ENCODE measurements at regions of chr14 and their contacts with region 1.

Region 1: DNA sequence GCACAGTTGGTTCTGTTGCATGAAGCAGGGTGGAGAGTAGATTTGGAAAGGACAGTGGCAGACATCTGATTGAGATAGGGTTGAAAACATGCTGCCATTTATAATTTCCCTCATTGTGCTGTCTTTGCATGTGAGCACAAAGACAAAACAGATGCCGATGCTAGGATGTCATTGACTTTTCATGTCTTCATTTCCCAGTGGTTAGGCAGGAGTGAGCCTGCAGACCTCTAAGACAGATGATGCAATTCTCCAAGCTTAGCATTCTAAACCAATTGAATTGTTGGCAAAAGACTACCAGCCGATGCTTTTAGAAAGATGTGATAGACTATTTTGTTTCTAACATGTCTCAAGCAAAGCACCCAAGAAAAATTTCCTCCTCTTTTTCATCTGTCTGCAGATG is 37.1 kb upstream of the PELI2 start:
- DNase-seq: no peak
- ATAC-seq: no peak
- H3K4me3 ChIP-seq: no peak overlapping the region
- H3K27ac ChIP-seq: no peak overlapping the region
- H3K4me1 ChIP-seq: no peaks in the 10 kb centered on the region
- H3K27me3 ChIP-seq: no peaks in the 10 kb centered on the region

Region 2: GRCh38 chr14:56044196-56044595 is 36.9 kb before region 1 on chr14:
- intact Hi-C with region 1: loop called in 1 of 2 experiments (anchors 5 kb)
- DNase-seq: no peak
- ATAC-seq: no peak
- H3K4me3 ChIP-seq: no peak overlapping the region
- H3K27ac ChIP-seq: no peak overlapping the region
- H3K4me1 ChIP-seq: no peaks in the 10 kb centered on the region
- H3K27me3 ChIP-seq: no peaks in the 10 kb centered on the region

Region 3: DNA sequence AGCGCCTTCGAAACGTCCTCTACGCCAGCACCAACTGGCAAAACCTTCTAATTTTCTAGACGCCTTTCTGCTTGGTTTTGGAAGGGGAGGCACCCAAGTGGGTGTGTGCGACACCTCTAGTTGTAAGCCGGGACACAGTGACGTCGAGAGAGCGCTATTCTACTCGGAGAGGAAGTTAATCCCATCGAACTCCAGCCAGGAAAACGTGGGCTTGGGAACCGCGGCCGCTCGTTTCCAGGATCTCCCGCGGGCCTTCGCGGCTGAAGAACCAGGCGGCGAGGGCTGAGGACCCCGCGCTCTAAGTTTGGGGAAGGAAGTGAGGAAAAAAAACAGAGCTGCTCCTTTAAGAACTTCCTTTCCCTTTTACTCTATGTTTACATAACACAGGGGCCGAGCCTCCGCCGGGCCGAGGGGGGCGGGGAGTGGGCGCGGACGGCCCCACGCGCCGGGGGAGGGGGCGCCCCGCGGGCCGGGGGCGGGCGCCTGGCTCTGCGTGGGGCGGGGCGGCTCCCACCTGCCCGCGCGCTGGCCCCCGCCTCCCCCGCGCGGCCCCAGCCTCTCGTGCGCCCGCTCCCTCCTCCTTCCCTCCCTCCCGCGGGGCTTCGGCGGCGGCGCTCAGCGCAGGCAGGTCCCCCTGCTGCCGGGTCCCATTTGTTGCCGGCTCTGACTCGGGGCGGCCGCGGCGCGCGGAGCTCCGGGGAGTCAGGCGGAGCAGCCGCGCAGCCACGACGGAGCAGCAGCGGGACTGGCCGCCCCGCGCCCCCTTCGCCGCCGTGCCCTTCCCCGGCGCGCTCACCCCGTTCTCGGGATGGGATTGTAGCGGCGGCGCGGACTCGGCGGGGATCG is 36.8 kb after region 1 on chr14 and contains the start of gene PELI2:
- intact Hi-C with region 1: no loop called
- DNase-seq: peak; percentile 87 to 93
- ATAC-seq: peak; percentile 91
- H3K4me3 ChIP-seq: peak within 1 kb of the TSS; percentile 79 to 96
- H3K27ac ChIP-seq: peak within 1 kb of the TSS; percentile 70 to 73
- H3K4me1 ChIP-seq: peaks cover 4 to 8% of the 10 kb centered on the region in 2 donors
- H3K27me3 ChIP-seq: no peaks in the 10 kb centered on the region
- total RNA-seq, gene PELI2: 19.7 to 22.8 TPM